ENCODE measurements at regions of chr12 and their contacts with region 1.

Region 1: DNA sequence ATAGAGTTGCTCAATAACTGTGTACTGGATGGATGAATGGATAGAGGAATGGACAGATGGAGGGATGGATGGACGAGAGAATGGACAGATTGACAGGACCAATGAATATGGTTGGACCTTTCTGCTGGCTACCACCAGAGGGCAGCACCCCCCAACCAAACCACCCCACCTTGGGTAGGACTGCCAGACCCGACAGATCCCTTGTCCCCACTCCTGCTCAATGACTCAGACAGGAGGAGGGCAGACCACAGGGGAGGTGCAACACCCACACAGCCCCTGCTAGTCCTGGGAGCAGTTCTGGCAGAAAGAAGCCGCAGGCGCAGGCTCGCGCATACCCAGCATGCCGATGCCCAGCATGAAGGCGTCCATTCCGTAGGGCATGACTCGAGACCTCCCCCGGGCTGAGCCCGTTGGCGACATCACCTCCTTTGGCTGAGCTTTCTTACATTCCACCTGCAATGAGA is 12.4 kb downstream of the MSI1 start:
- DNase-seq: peak; percentile 59 to 66 (median 63)
- H3K4me3 ChIP-seq: no peak overlapping the region
- H3K4me3 Mint-ChIP-seq: no peak overlapping the region
- H3K27ac ChIP-seq: no peak overlapping the region
- H3K27ac Mint-ChIP-seq: peak overlapping the region in 1 of 7 donors; percentile 57
- H3K4me1 ChIP-seq: no peaks in the 10 kb centered on the region
- H3K4me1 Mint-ChIP-seq: peaks cover 0 to 1% (median 0%) of the 10 kb centered on the region in 4 donors
- H3K27me3 ChIP-seq: no peaks in the 10 kb centered on the region
- H3K27me3 Mint-ChIP-seq: peaks cover 9 to 30% of the 10 kb centered on the region in 2 donors

Region 2: GRCh38 chr12:120286796-120287465 is 69.7 kb before region 1 on chr12:
- CTCF ChIA-PET with region 1: no interaction called
- POLR2A ChIA-PET with region 1: no interaction called
- intact Hi-C with region 1: no loop called
- DNase-seq: no peak
- H3K4me3 ChIP-seq: no peak overlapping the region
- H3K4me3 Mint-ChIP-seq: no peak overlapping the region
- H3K27ac ChIP-seq: no peak overlapping the region
- H3K27ac Mint-ChIP-seq: peak overlapping the region in 1 of 7 donors; percentile 61
- H3K4me1 ChIP-seq: peaks cover 12% of the 10 kb centered on the region
- H3K4me1 Mint-ChIP-seq: peaks cover 6 to 17% (median 8%) of the 10 kb centered on the region in 4 donors
- H3K27me3 ChIP-seq: no peaks in the 10 kb centered on the region
- H3K27me3 Mint-ChIP-seq: no peaks in the 10 kb centered on the region

Region 3: DNA sequence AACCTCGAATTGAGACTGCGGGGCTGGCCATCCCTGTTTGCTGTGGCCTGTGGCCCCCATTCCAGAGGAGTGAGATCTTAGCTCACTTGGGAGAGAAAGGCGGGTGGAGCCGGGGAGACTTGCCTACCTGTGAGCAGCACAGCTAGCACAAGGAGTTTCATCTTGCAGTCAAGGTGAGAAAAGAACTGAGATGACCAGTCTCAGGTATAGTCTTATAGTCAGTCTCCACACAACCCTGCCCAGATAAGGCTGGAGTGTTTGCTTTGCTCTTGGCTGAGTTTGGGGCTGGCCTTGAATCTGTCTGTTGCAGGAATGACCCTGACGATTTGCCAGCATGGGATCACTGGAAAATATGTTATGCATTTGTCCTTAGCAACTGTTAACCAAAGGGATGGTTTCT is 29.0 kb before region 1 on chr12 and contains the start of gene PLA2G1B:
- CTCF ChIA-PET with region 1: interaction called, 4 read pairs
- POLR2A ChIA-PET with region 1: no interaction called
- intact Hi-C with region 1: loop called (anchors 2 kb)
- DNase-seq: no peak
- H3K4me3 ChIP-seq: no peak within 1 kb of the TSS
- H3K4me3 Mint-ChIP-seq: peak within 1 kb of the TSS in 1 of 8 donors; percentile 10
- H3K27ac ChIP-seq: no peak within 1 kb of the TSS
- H3K27ac Mint-ChIP-seq: no peak within 1 kb of the TSS
- H3K4me1 ChIP-seq: no peaks in the 10 kb centered on the region
- H3K4me1 Mint-ChIP-seq: peaks cover 3 to 8% (median 6%) of the 10 kb centered on the region in 4 donors
- H3K27me3 ChIP-seq: no peaks in the 10 kb centered on the region
- H3K27me3 Mint-ChIP-seq: peaks cover 1 to 3% of the 10 kb centered on the region in 2 donors
- total RNA-seq, gene PLA2G1B: not detected

Region 4: DNA sequence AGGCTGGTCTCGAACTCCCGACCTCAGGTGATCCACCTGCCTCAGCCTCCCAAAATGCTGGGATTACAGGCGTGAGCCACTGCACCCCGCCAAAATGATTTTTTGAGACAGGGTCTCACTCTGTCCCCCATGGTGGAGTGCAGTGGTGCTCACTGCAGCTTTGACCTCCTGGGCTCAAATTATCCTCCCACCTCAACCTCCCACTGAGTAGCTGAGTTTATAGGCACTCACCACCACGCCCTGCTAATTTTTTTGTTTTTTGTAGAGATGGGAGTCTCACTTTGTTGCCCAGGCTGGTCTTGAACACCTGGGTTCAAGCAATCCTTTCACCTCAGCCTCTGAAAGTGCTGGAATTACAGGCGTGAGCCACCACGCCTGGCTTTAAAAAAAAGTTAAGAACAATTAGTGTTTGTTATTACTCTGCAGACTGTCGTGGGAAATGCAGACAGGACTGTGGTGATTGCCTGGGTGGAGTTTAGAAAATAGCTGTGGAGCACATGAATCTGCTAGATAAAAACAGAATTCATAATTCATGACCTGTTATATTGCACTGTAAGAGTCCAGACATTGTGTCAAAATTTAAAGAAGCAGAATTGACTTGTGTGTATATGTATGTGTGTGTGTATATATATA is 72.1 kb after region 1 on chr12:
- CTCF ChIA-PET with region 1: interaction called, 14 read pairs
- POLR2A ChIA-PET with region 1: interaction called, 3 read pairs
- intact Hi-C with region 1: loop called (anchors 1 kb)
- DNase-seq: no peak
- H3K4me3 ChIP-seq: no peak overlapping the region
- H3K4me3 Mint-ChIP-seq: no peak overlapping the region
- H3K27ac ChIP-seq: no peak overlapping the region
- H3K27ac Mint-ChIP-seq: peak overlapping the region in 1 of 7 donors; percentile 52
- H3K4me1 ChIP-seq: no peaks in the 10 kb centered on the region
- H3K4me1 Mint-ChIP-seq: peaks cover 0 to 4% (median 2%) of the 10 kb centered on the region in 4 donors
- H3K27me3 ChIP-seq: no peaks in the 10 kb centered on the region
- H3K27me3 Mint-ChIP-seq: peaks cover 6 to 10% of the 10 kb centered on the region in 2 donors

Measured in CD4-positive, alpha-beta memory T cell (primary cell).